HepG2 (cell line): ENCODE measurements at regions of chr12 and their contacts with region 1.

Region 1: DNA sequence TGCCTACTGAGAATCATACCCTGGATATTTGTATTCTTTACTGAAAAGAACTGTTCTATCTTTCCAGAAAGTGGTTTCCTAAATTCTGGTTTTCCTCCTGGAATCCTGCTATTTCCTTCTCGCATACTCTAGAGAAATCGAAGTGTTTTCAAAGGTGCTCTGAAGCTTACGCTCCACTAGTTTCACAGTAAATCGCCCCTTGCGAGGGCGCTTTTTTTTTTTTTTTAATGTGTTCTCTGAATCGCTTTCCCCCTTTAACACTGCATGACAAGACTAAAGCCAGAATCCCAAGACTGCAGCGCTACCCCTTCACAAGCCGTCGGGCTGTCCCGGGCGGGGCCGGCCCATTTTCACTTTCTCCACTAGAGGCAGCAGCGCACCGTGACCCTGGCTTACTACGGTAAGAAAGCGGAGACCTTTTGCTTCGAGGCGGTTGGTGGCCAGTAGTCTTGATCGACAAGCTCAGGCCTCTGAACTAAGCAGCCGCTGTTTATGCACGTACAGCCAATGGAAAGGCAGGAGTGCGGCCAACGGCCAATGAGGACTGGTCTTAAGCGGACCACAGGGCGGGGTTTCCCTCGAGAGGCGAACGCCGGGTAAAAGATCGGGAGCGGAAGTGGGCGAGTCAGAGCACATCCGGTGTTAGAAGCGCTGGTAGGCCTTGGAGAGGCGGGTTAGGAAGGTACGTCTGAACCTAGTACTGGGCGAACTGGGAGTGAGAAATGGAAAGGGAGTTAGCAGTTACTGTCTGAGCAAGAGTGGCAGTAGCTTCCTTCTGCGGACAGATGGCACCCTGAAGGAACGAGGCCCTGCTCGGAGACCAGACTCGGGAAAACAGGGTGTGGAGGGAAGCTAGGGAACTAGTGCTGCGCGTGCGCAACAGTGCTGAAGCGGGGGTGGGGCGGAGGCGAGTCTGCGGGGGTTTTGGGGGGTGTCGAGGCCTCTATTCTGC is at the start of gene TMBIM6:
- DNase-seq: peak; percentile 100
- ATAC-seq: peak; percentile 95
- H3K4me3 ChIP-seq: peak within 1 kb of the TSS; percentile 64 to 94 (median 79)
- H3K27ac ChIP-seq: peak within 1 kb of the TSS; percentile 95
- H3K4me1 ChIP-seq: peaks cover 43% of the 10 kb centered on the region
- H3K27me3 ChIP-seq: no peaks in the 10 kb centered on the region; a peak in 1 of 5 replicates
- CTCF ChIP-seq: peak; percentile 96
- EP300 ChIP-seq: peak in 1 of 2 experiments; percentile 62; a peak in 1 of 4 replicates
- POLR2A ChIP-seq: peak; percentile 99 to 100
- RAD21 ChIP-seq: peak; percentile 74
- total RNA-seq, gene TMBIM6: 220 and 412 TPM in 2 replicates

Region 2: GRCh38 chr12:49644620-49644994 is 96.6 kb before region 1 on chr12:
- CTCF ChIA-PET with region 1: no interaction called
- POLR2A ChIA-PET with region 1: interaction called, 16 read pairs
- in situ Hi-C with region 1: no loop called
- intact Hi-C with region 1: no loop called
- DNase-seq: peak; percentile 49
- ATAC-seq: peak; percentile 65
- H3K4me3 ChIP-seq: no peak overlapping the region
- H3K27ac ChIP-seq: no peak overlapping the region
- H3K4me1 ChIP-seq: peaks cover 52% of the 10 kb centered on the region
- H3K27me3 ChIP-seq: no peaks in the 10 kb centered on the region; a peak in 1 of 5 replicates
- CTCF ChIP-seq: peak; percentile 88
- EP300 ChIP-seq: no peak
- POLR2A ChIP-seq: no peak
- RAD21 ChIP-seq: peak; percentile 89

Region 3: GRCh38 chr12:49707128-49707811 is 33.9 kb before region 1 on chr12 and contains the start of gene FMNL3:
- CTCF ChIA-PET with region 1: no interaction called
- POLR2A ChIA-PET with region 1: interaction called, 10 read pairs
- in situ Hi-C with region 1: no loop called
- intact Hi-C with region 1: no loop called
- DNase-seq: peak; percentile 72
- ATAC-seq: peak; percentile 94
- H3K4me3 ChIP-seq: peak within 1 kb of the TSS; percentile 42 to 64 (median 54); a peak in 4 of 6 replicates
- H3K27ac ChIP-seq: no peak within 1 kb of the TSS
- H3K4me1 ChIP-seq: peaks cover 14% of the 10 kb centered on the region; the same call in 1 of the 2 replicates
- H3K27me3 ChIP-seq: peaks cover 0 to 14% of the 10 kb centered on the region in 2 experiments; a peak in 1 of 5 replicates
- CTCF ChIP-seq: peak; percentile 94
- EP300 ChIP-seq: no peak
- POLR2A ChIP-seq: no peak
- RAD21 ChIP-seq: peak; percentile 95
- total RNA-seq, gene FMNL3: 0.79 and 1.1 TPM in 2 replicates

Region 4: GRCh38 chr12:49763006-49763591 is 21.9 kb after region 1 on chr12:
- CTCF ChIA-PET with region 1: interaction called, 3 read pairs
- POLR2A ChIA-PET with region 1: interaction called, 34 read pairs
- in situ Hi-C with region 1: no loop called
- intact Hi-C with region 1: no loop called
- DNase-seq: peak; percentile 40
- ATAC-seq: peak; percentile 71
- H3K4me3 ChIP-seq: no peak overlapping the region
- H3K27ac ChIP-seq: no peak overlapping the region
- H3K4me1 ChIP-seq: peaks cover 12% of the 10 kb centered on the region
- H3K27me3 ChIP-seq: no peaks in the 10 kb centered on the region
- CTCF ChIP-seq: peak; percentile 79
- EP300 ChIP-seq: no peak
- POLR2A ChIP-seq: no peak
- RAD21 ChIP-seq: peak; percentile 22; the same call in 1 of the 2 replicates

Region 5: GRCh38 chr12:49828133-49829091 is 87.2 kb after region 1 on chr12 and contains the start of gene NCKAP5L:
- CTCF ChIA-PET with region 1: no interaction called
- POLR2A ChIA-PET with region 1: interaction called, 35 read pairs
- in situ Hi-C with region 1: no loop called
- intact Hi-C with region 1: no loop called
- DNase-seq: peak; percentile 91
- ATAC-seq: peak; percentile 89
- H3K4me3 ChIP-seq: peak within 1 kb of the TSS; percentile 72 to 94 (median 90)
- H3K27ac ChIP-seq: peak within 1 kb of the TSS; percentile 84
- H3K4me1 ChIP-seq: peaks cover 63% of the 10 kb centered on the region
- H3K27me3 ChIP-seq: no peaks in the 10 kb centered on the region; a peak in 1 of 5 replicates
- CTCF ChIP-seq: no peak
- EP300 ChIP-seq: no peak
- POLR2A ChIP-seq: peak; percentile 64 to 65
- RAD21 ChIP-seq: no peak
- total RNA-seq, gene NCKAP5L: 5.9 and 9.0 TPM in 2 replicates

Region 6: GRCh38 chr12:49967042-49967776 is 226.0 kb after region 1 on chr12:
- CTCF ChIA-PET with region 1: no interaction called
- POLR2A ChIA-PET with region 1: no interaction called
- in situ Hi-C with region 1: no loop called
- intact Hi-C with region 1: no loop called
- DNase-seq: peak; percentile 71
- ATAC-seq: peak; percentile 79
- H3K4me3 ChIP-seq: peak overlapping the region; percentile 33 to 69 (median 40); a peak in 5 of 6 replicates
- H3K27ac ChIP-seq: no peak overlapping the region
- H3K4me1 ChIP-seq: peaks cover 54% of the 10 kb centered on the region
- H3K27me3 ChIP-seq: peaks cover 5 to 65% of the 10 kb centered on the region in 2 experiments
- CTCF ChIP-seq: peak; percentile 91
- EP300 ChIP-seq: no peak
- POLR2A ChIP-seq: no peak
- RAD21 ChIP-seq: peak; percentile 91